ENCODE measurements at regions of chr5 and their contacts with region 1.

Region 1: DNA sequence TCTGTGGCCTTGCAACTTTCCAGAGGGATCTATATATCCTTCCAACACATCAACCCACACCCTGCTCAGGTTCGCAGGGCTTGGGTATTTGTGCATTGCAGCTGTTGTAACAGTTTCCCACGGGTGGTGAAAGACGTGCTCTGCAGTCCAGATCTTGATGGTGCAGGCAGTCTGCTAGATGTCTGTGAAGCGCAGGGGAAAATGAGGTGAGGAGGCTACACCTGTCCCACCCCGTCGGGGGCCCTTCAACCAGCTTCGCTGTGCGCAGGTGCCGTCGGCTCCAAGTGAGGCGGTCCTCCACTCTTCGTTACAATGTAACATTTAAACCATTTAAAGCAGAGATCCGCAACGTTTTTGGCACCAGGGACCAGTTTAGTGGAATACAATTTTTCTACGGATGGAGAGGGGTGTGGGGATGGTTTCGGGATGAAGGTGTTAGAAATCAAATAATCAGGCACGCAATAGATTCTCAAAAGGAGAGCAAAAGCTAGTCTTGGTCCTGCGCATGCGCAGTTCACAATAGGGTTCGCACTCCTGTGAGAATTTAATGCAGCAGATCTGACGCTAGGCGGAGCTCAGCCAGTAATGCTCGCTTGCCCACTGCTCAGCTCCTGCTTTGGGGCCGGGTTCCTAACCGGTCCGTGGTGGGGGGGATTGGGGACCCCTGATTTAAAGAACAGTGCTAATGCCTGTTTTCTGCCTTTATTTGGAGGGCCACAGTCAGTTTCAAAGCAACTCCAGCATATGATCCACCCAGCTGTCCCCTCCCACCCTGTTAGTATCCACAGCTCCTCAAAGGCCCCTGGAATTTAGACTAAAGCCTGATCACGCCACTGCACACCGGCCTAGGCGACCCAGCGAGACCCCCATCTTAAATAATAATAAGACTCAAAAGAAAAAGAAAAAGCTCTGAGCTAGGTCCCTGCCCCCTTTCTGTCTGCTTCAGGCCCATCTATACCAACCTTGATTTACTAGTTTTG is 97.1 kb upstream of the SELENOP start:
- DNase-seq: peak; percentile 75 to 92
- H3K4me3 ChIP-seq: peak overlapping the region; percentile 28; the same call in 1 of the 2 replicates
- H3K27ac ChIP-seq: no peak overlapping the region
- H3K4me1 ChIP-seq: 0 out of 2 replicates have a peak, but pooled peaks cover 13% of the 10 kb centered on the region
- H3K27me3 ChIP-seq: peaks cover 10% of the 10 kb centered on the region; the same call in 1 of the 2 replicates
- CTCF ChIP-seq: peak; percentile 94

Region 2: DNA sequence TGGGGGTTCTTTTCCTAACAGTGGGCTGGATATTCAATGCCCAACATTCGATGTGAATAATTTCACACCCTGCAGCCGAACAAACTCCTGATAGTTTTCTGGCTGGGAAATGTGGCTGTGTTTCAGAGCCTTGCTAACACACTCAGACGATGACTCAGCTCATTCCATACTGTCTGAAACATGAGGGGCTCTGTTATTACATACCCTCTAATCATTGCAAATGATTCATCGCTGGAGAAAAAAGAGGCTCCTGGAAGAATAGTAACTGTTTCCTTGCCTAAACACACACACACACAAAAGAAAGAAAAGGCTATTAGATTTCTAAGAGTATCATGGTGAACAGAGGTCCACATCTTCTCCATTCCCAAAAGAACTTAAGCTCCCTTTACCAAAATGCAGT is 1114.3 kb before region 1 on chr5:
- CTCF ChIA-PET with region 1: no interaction called
- POLR2A ChIA-PET with region 1: no interaction called
- intact Hi-C with region 1: no loop called
- DNase-seq: peak; percentile 36 to 66
- H3K4me3 ChIP-seq: no peak overlapping the region
- H3K27ac ChIP-seq: peak overlapping the region; percentile 36
- H3K4me1 ChIP-seq: peaks cover 12% of the 10 kb centered on the region
- H3K27me3 ChIP-seq: no peaks in the 10 kb centered on the region
- CTCF ChIP-seq: no peak

Region 3: GRCh38 chr5:43008369-43009153 is 99.8 kb after region 1 on chr5:
- CTCF ChIA-PET with region 1: interaction called, 12 read pairs
- POLR2A ChIA-PET with region 1: interaction called, 5 read pairs
- intact Hi-C with region 1: loop called (anchors 1 kb)
- DNase-seq: peak; percentile 94 to 98
- H3K4me3 ChIP-seq: peak overlapping the region; percentile 58
- H3K27ac ChIP-seq: peak overlapping the region; percentile 85
- H3K4me1 ChIP-seq: peaks cover 15% of the 10 kb centered on the region
- H3K27me3 ChIP-seq: no peaks in the 10 kb centered on the region
- CTCF ChIP-seq: peak; percentile 18; the same call in 1 of the 2 replicates

Region 4: GRCh38 chr5:43040287-43041098 is 131.7 kb after region 1 on chr5 and contains the start of gene ANXA2R:
- CTCF ChIA-PET with region 1: interaction called, 46 read pairs
- POLR2A ChIA-PET with region 1: no interaction called
- intact Hi-C with region 1: loop called (anchors 1 kb)
- DNase-seq: peak; percentile 94 to 97
- H3K4me3 ChIP-seq: peak within 1 kb of the TSS; percentile 76
- H3K27ac ChIP-seq: peak within 1 kb of the TSS; percentile 60
- H3K4me1 ChIP-seq: peaks cover 1% of the 10 kb centered on the region; the same call in 1 of the 2 replicates
- H3K27me3 ChIP-seq: no peaks in the 10 kb centered on the region
- CTCF ChIP-seq: peak; percentile 99
- total RNA-seq, gene ANXA2R: 3.6 and 6.3 TPM in 2 replicates

Region 5: DNA sequence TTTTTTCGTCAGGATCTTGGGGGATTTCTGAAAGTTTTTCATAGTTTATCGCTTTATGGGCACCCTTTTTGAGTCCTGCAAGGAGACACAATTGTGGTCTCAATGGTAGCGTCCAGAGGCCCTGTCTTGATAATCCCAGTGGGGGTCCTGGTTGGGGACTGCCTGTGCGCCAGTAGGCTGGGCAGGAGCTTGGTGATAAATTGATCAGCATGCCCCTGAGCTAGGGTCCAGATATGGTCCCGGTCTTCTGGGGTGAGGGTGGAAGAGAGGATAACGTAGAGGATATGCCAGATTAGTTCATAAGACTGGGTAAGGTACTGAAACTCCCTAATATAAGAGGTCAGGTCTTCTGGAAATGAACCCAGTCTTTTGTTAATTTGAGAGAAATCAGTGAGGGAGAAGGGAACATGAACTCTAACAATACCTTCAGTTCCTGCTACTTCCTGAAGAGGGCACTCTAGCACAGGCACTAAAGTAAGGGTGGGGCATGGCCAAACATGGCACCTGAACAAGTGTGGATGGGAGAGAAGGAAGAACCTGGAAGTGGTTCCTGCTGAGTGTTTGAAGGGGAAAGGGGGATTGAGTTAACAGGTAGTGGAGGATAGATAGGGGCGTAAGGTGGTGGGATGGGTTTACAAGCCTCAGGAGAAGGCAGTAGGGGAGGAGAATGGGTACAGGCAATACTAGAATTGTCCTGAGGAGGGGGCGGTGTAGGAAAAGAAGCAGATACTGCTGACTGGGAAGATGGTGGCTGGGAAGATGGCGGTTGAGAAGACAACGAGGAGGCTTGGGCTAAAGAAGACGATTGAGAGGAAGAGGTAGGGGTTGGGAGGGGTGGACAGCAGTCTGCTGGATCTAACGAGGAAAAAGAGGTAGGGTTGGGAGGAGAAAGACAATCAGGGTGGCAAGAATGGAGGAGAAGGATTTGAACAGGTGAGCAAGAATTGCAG is 165.1 kb after region 1 on chr5:
- CTCF ChIA-PET with region 1: interaction called, 6 read pairs
- POLR2A ChIA-PET with region 1: no interaction called
- intact Hi-C with region 1: loop called (anchors 2 kb)
- DNase-seq: peak in 1 of 2 experiments; percentile 55
- H3K4me3 ChIP-seq: no peak overlapping the region
- H3K27ac ChIP-seq: no peak overlapping the region
- H3K4me1 ChIP-seq: peaks cover 5% of the 10 kb centered on the region
- H3K27me3 ChIP-seq: no peaks in the 10 kb centered on the region
- CTCF ChIP-seq: peak; percentile 97

Region 6: DNA sequence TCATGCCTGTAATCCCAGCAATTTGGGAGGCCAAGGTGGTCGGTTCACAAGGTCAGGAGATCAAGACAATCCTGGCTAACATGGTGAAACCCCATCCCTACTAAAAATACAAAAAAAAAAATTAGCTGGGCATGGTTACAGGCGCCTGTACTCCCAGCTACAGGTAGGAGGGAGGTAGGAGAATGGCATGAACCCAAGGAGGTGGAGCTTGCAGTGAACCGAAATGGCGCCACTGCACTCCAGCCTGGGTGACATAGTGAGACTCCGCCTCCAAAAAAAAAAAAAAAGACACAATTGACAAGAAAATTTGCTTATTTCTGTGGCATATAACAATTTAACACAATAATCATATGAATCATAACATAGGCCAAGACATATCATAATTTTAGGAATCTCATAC is 176.7 kb after region 1 on chr5:
- CTCF ChIA-PET with region 1: no interaction called
- POLR2A ChIA-PET with region 1: no interaction called
- intact Hi-C with region 1: no loop called
- DNase-seq: no peak
- H3K4me3 ChIP-seq: no peak overlapping the region
- H3K27ac ChIP-seq: no peak overlapping the region
- H3K4me1 ChIP-seq: no peaks in the 10 kb centered on the region
- H3K27me3 ChIP-seq: no peaks in the 10 kb centered on the region
- CTCF ChIP-seq: no peak

Region 7: DNA sequence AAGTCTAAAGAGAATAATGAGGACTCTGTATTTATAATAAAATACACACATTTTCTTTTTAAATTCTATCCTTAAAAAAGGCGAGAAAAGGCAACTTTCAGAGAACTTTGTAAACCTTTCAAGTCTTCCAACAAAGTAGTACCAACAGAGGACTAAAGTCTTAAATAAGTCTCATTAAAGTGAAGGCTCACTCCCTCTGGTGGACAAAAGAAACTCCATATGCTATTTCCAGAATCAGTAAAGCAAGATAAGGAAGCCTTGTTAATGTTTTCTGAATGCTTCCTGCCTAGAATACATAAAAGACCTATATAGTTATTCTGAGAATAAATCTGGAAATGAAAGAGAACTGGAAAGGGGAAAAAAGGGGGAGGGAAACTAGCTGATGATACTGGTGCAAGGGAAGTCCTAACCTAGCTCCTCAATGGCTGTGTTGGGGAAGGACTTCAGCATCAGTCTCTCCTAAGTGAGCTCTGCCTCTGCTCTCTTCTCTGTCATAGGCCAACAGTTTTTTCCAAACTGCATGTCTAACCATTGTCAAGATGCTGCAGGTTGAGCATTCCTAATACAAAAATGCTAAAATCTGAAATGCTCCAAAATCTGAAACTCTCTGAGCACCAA is 397.3 kb after region 1 on chr5:
- CTCF ChIA-PET with region 1: no interaction called
- POLR2A ChIA-PET with region 1: no interaction called
- intact Hi-C with region 1: loop called (anchors 5 kb)
- DNase-seq: peak in 1 of 2 experiments; percentile 77
- H3K4me3 ChIP-seq: no peak overlapping the region
- H3K27ac ChIP-seq: no peak overlapping the region
- H3K4me1 ChIP-seq: peaks cover 34% of the 10 kb centered on the region
- H3K27me3 ChIP-seq: no peaks in the 10 kb centered on the region
- CTCF ChIP-seq: peak; percentile 95

Measured in PC-9 (cell line).